ENCODE measurements at regions of chr2 and their contacts with region 1.

Region 1: GRCh38 chr2:26605195-26605998 is 35.8 kb downstream of the CIB4 start:
- DNase-seq: peak; percentile 52
- H3K4me3 Mint-ChIP-seq: no peak overlapping the region
- H3K27ac Mint-ChIP-seq: no peak overlapping the region
- H3K4me1 Mint-ChIP-seq: peaks cover 18% of the 10 kb centered on the region
- H3K27me3 Mint-ChIP-seq: peaks cover 21% of the 10 kb centered on the region

Region 2: GRCh38 chr2:26591619-26592505 is 13.5 kb before region 1 on chr2:
- CTCF ChIA-PET with region 1: interaction called, 11 read pairs
- intact Hi-C with region 1: no loop called
- DNase-seq: no peak
- H3K4me3 Mint-ChIP-seq: no peak overlapping the region
- H3K27ac Mint-ChIP-seq: no peak overlapping the region
- H3K4me1 Mint-ChIP-seq: peaks cover 3% of the 10 kb centered on the region
- H3K27me3 Mint-ChIP-seq: peaks cover 17% of the 10 kb centered on the region

Region 3: DNA sequence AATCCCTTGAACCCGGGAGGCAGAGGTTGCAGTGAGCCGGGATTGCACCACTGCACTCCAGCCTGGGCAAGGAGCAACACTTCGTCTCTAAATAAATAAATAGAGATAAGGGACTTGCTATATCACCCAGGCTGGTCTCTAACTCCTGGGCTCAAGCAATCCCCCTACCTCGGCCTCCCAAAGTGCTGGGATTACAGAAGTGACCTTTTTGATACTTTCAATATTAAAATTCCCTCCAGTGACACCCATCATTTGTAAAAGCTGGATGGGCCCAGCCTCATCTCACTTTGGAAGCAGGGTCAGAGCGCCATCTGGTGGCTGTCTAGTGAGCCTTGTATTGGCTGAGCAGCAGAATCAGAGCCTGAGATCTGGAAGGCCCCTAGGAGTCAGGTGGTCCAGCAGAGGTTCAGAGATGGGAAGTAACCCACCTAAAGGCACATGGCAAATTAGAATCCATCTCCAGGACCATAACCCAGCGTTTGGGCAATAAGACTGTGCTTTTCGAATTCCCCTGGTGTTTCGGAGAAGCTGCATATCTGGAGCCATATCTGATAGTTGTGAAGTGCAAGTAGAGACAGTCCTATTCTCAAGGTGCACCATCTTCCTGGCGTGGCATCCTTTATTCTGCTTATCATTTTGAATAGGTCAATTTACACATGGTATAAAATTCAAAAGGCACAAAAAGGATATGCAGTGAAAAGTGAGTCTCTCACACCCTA is 140.4 kb after region 1 on chr2:
- CTCF ChIA-PET with region 1: interaction called, 109 read pairs
- intact Hi-C with region 1: loop called (anchors 1 kb)
- DNase-seq: peak; percentile 92
- H3K4me3 Mint-ChIP-seq: no peak overlapping the region
- H3K27ac Mint-ChIP-seq: no peak overlapping the region
- H3K4me1 Mint-ChIP-seq: no peaks in the 10 kb centered on the region
- H3K27me3 Mint-ChIP-seq: no peaks in the 10 kb centered on the region

Region 4: GRCh38 chr2:26942543-26943295 is 337.3 kb after region 1 on chr2:
- CTCF ChIA-PET with region 1: interaction called, 4 read pairs
- intact Hi-C with region 1: loop called (anchors 10 kb)
- DNase-seq: peak; percentile 81
- H3K4me3 Mint-ChIP-seq: no peak overlapping the region
- H3K27ac Mint-ChIP-seq: no peak overlapping the region
- H3K4me1 Mint-ChIP-seq: peaks cover 2% of the 10 kb centered on the region
- H3K27me3 Mint-ChIP-seq: peaks cover 6% of the 10 kb centered on the region

Measured in activated naive CD4-positive, alpha-beta T cell treated with anti-CD3 and anti-CD28 coated beads for 36 hours (primary cell).